Activated CD4-positive, alpha-beta T cell treated with anti-CD3 and anti-CD28 coated beads, Interleukin-2, amount 10 ng/mL, durations not matched to agents 7 days and 5 days (primary cell): ENCODE measurements at regions of chr2 and their contacts with region 1.

Region 1: GRCh38 chr2:151043486-151043885 is 218.2 kb downstream of the RBM43 start:
- DNase-seq: no peak
- H3K4me3 Mint-ChIP-seq: no peak overlapping the region
- H3K27ac Mint-ChIP-seq: no peak overlapping the region
- H3K4me1 Mint-ChIP-seq: no peaks in the 10 kb centered on the region
- H3K27me3 Mint-ChIP-seq: peaks cover 4% of the 10 kb centered on the region

Region 2: GRCh38 chr2:150911766-150912280 is 131.7 kb before region 1 on chr2:
- CTCF ChIA-PET with region 1: no interaction called
- POLR2A ChIA-PET with region 1: interaction called, 15 read pairs
- DNase-seq: no peak
- H3K4me3 Mint-ChIP-seq: no peak overlapping the region
- H3K27ac Mint-ChIP-seq: no peak overlapping the region
- H3K4me1 Mint-ChIP-seq: no peaks in the 10 kb centered on the region
- H3K27me3 Mint-ChIP-seq: no peaks in the 10 kb centered on the region

Region 3: DNA sequence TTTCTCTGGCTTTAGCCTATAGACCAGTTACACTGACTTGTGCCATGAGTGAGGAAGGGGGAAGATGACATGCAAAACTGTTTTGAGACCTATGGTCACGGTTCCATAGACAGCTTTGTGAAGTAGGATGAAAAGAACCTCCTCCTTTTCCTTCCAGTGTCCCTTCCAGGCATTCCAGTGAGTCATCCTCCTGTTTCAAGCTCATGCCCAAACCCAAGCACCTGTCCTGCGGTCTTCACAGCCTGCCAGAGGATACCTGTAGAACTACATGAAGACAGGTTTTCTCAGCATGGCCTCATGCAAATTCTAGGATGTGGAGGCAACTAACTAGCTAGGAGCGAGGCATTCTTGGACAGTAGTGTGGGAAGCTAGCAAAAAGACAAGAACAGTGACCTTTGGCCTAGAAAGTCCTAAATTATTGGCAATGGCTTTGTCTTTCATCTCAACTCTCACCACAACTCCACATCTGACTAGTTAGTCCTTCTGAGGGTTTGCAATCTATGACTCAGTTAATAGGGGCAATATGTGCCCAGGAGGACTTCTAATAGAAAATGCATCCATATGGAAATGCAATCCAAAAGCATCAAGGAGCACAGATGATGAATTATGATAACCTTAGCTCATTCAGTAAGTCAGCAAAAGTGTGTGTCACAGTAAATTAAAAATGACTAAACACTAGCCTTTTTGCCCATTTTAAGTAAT is 63.5 kb after region 1 on chr2:
- CTCF ChIA-PET with region 1: no interaction called
- POLR2A ChIA-PET with region 1: no interaction called
- DNase-seq: no peak
- H3K4me3 Mint-ChIP-seq: no peak overlapping the region
- H3K27ac Mint-ChIP-seq: no peak overlapping the region
- H3K4me1 Mint-ChIP-seq: no peaks in the 10 kb centered on the region
- H3K27me3 Mint-ChIP-seq: no peaks in the 10 kb centered on the region